Activated CD8-positive, alpha-beta T cell treated with anti-CD3 and anti-CD28 coated beads for 36 hours (primary cell): ENCODE measurements at regions of chr4 and their contacts with region 1.

Region 1: GRCh38 chr4:82900331-82901128 is at the start of gene THAP9:
- DNase-seq: peak; percentile 99
- ATAC-seq: peak; percentile 90
- H3K4me3 Mint-ChIP-seq: no peak within 1 kb of the TSS
- H3K27ac Mint-ChIP-seq: no peak within 1 kb of the TSS
- H3K4me1 Mint-ChIP-seq: peaks cover 47% of the 10 kb centered on the region
- H3K27me3 Mint-ChIP-seq: no peaks in the 10 kb centered on the region
- CTCF ChIP-seq: no peak
- total RNA-seq, gene THAP9: 3.5 to 4.4 TPM

Region 2: GRCh38 chr4:82652062-82652461 is 248.5 kb before region 1 on chr4:
- CTCF ChIA-PET with region 1: no interaction called
- POLR2A ChIA-PET with region 1: no interaction called
- intact Hi-C with region 1: no loop called
- DNase-seq: no peak
- ATAC-seq: no peak
- H3K4me3 Mint-ChIP-seq: no peak overlapping the region
- H3K27ac Mint-ChIP-seq: no peak overlapping the region
- H3K4me1 Mint-ChIP-seq: no peaks in the 10 kb centered on the region
- H3K27me3 Mint-ChIP-seq: no peaks in the 10 kb centered on the region
- CTCF ChIP-seq: no peak

Region 3: DNA sequence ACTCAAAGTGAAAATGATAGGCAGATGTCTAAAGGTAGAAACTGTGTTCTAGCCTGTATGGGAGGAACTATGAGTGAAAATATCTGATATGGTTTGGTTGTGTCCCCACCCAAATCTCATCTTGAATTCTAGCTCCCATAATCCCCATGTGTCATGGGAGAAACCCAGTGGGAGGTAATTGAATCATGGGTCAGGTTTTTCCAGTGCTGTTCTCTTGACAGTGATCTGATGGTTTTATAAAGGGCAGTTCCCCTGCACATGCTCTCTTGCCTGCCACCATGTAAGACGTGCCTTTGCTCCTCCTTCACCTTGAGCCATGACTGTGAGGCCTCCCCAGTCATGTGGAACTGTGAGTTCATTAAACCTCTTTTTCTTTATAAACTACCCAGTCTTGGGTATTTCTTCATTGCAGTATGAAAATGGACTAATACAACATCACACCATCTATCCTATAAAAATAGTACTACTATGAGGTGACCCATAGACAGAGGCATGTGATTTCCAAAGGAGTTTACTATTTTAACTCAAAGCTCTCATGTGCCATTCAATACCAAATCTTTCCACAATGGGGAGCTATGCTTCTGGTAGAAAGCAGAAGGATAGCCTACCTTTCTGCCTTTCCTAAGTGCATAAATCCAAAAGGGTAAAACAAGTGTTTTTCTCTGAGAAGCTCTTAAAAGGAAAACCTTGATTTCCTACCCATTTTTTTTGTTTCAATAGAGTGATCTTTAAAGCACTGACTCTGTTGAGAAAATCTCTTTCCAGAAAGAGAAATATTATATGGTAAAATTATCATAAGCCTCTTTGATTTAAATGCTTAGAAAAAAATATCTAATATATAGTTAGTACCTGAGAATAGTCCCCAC is 48.4 kb before region 1 on chr4:
- CTCF ChIA-PET with region 1: interaction called, 10 read pairs
- POLR2A ChIA-PET with region 1: interaction called, 3 read pairs
- intact Hi-C with region 1: no loop called
- DNase-seq: no peak
- ATAC-seq: peak; percentile 51
- H3K4me3 Mint-ChIP-seq: no peak overlapping the region
- H3K27ac Mint-ChIP-seq: no peak overlapping the region
- H3K4me1 Mint-ChIP-seq: peaks cover 6% of the 10 kb centered on the region
- H3K27me3 Mint-ChIP-seq: no peaks in the 10 kb centered on the region
- CTCF ChIP-seq: peak; percentile 55

Region 4: GRCh38 chr4:83012687-83013419 is 112.3 kb after region 1 on chr4:
- CTCF ChIA-PET with region 1: interaction called, 8 read pairs
- POLR2A ChIA-PET with region 1: interaction called, 18 read pairs
- intact Hi-C with region 1: loop called (anchors 5 kb)
- DNase-seq: peak; percentile 97
- ATAC-seq: peak; percentile 91
- H3K4me3 Mint-ChIP-seq: peak overlapping the region; percentile 97
- H3K27ac Mint-ChIP-seq: peak overlapping the region; percentile 91
- H3K4me1 Mint-ChIP-seq: peaks cover 27% of the 10 kb centered on the region
- H3K27me3 Mint-ChIP-seq: no peaks in the 10 kb centered on the region
- CTCF ChIP-seq: no peak

Region 5: GRCh38 chr4:83034630-83035494 is 134.3 kb after region 1 on chr4 and contains the start of gene COPS4:
- CTCF ChIA-PET with region 1: interaction called, 6 read pairs
- POLR2A ChIA-PET with region 1: no interaction called
- intact Hi-C with region 1: loop called (anchors 2 kb)
- DNase-seq: peak; percentile 98
- ATAC-seq: peak; percentile 99
- H3K4me3 Mint-ChIP-seq: peak within 1 kb of the TSS; percentile 95
- H3K27ac Mint-ChIP-seq: peak within 1 kb of the TSS; percentile 100
- H3K4me1 Mint-ChIP-seq: peaks cover 26% of the 10 kb centered on the region
- H3K27me3 Mint-ChIP-seq: no peaks in the 10 kb centered on the region
- CTCF ChIP-seq: no peak
- total RNA-seq, gene COPS4: 38.4 to 38.8 TPM

Region 6: GRCh38 chr4:83231620-83232076 is 331.1 kb after region 1 on chr4:
- CTCF ChIA-PET with region 1: no interaction called
- POLR2A ChIA-PET with region 1: no interaction called
- intact Hi-C with region 1: loop called (anchors 10 kb)
- DNase-seq: peak; percentile 72
- ATAC-seq: peak; percentile 82
- H3K4me3 Mint-ChIP-seq: no peak overlapping the region
- H3K27ac Mint-ChIP-seq: peak overlapping the region; percentile 60
- H3K4me1 Mint-ChIP-seq: peaks cover 49% of the 10 kb centered on the region
- H3K27me3 Mint-ChIP-seq: peaks cover 1% of the 10 kb centered on the region
- CTCF ChIP-seq: no peak